ENCODE measurements at regions of chr16 and their contacts with region 1.

Region 1: DNA sequence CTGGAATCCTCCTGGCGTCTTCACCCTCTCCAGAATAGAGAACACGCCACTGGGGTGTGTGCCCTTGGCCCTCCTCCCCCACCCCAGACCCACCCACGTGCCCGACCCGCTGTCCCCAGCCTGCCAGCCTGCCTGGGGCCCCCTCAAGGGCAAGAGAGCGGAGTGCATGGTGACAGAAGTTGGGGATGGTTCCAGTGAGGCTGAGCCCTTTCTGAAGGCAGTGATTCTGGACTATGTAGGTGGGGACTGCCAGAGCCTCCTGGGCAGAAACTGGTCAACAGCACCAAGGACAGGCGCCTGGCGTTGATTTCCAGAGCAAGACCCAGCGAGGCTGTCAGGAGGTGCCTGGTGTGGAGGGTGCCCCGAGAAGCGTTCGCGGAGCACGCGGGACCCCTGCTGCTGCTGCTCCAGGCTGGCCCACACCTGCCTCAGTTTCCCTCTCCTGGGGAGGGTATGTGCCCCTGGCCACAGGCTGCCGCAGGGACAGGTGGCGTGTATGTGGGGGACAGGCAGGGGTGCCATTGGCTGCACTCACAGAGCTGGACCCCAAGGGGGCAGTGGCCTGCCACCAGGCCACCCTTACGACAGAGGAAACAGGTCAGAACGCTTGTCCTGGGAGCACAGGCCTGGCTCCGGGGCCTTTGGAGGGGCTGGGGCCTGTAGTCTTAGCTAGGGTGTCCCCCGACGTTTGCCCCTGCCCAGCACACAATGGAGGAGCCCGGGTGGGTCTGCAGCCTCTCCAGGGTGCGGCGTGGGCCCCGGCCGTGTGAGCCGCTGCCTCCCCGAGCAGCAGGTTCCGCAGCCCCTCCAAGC is 1.2 kb downstream of the SSTR5 start:
- DNase-seq: peak; percentile 52
- ATAC-seq: peak; percentile 52
- H3K4me3 Mint-ChIP-seq: 0 out of 2 replicates have a peak overlapping the region, but pooled peaks have one; percentile 14
- H3K27ac Mint-ChIP-seq: no peak overlapping the region
- H3K4me1 Mint-ChIP-seq: peaks cover 7% of the 10 kb centered on the region
- H3K27me3 Mint-ChIP-seq: peaks cover 6% of the 10 kb centered on the region; the same call in 1 of the 2 replicates
- CTCF ChIP-seq: peak; percentile 30; the same call in 1 of the 2 replicates

Region 2: DNA sequence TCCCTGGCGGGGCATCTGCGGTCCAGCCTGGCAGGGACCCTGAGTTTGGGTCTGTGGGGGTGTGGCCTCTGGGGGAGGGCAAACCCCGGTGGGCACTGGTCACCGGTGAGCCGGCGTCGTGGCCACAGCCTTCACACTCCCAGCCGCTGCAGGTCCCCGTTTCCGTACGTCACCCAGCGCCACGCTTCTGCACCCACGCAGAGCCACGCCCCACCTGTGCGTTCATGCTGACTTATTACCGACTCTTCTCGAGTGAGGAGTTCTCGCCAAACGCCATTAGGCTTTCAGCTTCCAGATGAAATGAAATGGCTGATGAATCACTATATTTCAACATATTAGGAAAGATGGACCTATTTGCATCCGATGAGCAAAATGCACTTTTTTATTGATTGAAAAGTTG is 10.0 kb before region 1 on chr16:
- CTCF ChIA-PET with region 1: interaction called, 97 read pairs
- POLR2A ChIA-PET with region 1: no interaction called
- DNase-seq: no peak
- ATAC-seq: no peak
- H3K4me3 Mint-ChIP-seq: no peak overlapping the region
- H3K27ac Mint-ChIP-seq: no peak overlapping the region
- H3K4me1 Mint-ChIP-seq: no peaks in the 10 kb centered on the region
- H3K27me3 Mint-ChIP-seq: peaks cover 5% of the 10 kb centered on the region
- CTCF ChIP-seq: no peak

Region 3: GRCh38 chr16:1102921-1103635 is 29.3 kb after region 1 on chr16:
- CTCF ChIA-PET with region 1: interaction called, 18 read pairs
- POLR2A ChIA-PET with region 1: no interaction called
- DNase-seq: peak; percentile 73
- ATAC-seq: peak; percentile 45
- H3K4me3 Mint-ChIP-seq: peak overlapping the region; percentile 36
- H3K27ac Mint-ChIP-seq: no peak overlapping the region
- H3K4me1 Mint-ChIP-seq: no peaks in the 10 kb centered on the region
- H3K27me3 Mint-ChIP-seq: no peaks in the 10 kb centered on the region
- CTCF ChIP-seq: peak; percentile 82

Measured in WTC11 (cell line).